ENCODE measurements at regions of chr5 and their contacts with region 1.

Region 1: DNA sequence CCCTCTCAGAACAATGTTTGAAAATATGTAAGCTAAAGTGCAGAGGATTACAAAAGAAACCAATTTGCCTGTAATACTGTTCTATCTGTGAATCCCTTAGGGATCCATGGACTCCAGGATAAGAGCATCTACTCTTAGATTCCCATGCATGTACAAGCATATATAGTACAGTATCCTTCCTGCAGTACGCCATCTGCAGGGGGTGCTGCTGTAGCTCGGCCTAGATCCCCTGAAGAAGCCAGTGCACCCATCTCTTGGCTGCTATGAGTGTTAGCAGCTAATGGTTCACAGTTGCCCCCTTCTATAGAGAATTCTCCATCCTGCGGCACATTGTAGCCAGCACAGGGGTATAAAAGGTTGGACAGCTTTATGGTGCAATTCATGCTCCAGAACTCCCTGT is 61.8 kb upstream of the SLC30A5 start:
- DNase-seq: no peak
- H3K4me3 ChIP-seq: no peak overlapping the region
- H3K4me3 Mint-ChIP-seq: no peak overlapping the region
- H3K27ac Mint-ChIP-seq: no peak overlapping the region
- H3K4me1 ChIP-seq: no peaks in the 10 kb centered on the region
- H3K4me1 Mint-ChIP-seq: peaks cover 6% of the 10 kb centered on the region
- H3K27me3 ChIP-seq: no peaks in the 10 kb centered on the region
- H3K27me3 Mint-ChIP-seq: peaks cover 2% of the 10 kb centered on the region
- CTCF ChIP-seq: peak in 1 of 2 experiments; percentile 32

Region 2: GRCh38 chr5:67672636-67673035 is 1359.4 kb before region 1 on chr5:
- CTCF ChIA-PET with region 1: no interaction called
- POLR2A ChIA-PET with region 1: no interaction called
- intact Hi-C with region 1: no loop called
- DNase-seq: no peak
- H3K4me3 ChIP-seq: no peak overlapping the region
- H3K4me3 Mint-ChIP-seq: no peak overlapping the region
- H3K27ac Mint-ChIP-seq: no peak overlapping the region
- H3K4me1 ChIP-seq: no peaks in the 10 kb centered on the region
- H3K4me1 Mint-ChIP-seq: no peaks in the 10 kb centered on the region
- H3K27me3 ChIP-seq: no peaks in the 10 kb centered on the region
- H3K27me3 Mint-ChIP-seq: no peaks in the 10 kb centered on the region
- CTCF ChIP-seq: no peak

Region 3: GRCh38 chr5:69152731-69153130 is 120.7 kb after region 1 on chr5:
- CTCF ChIA-PET with region 1: interaction called, 3 read pairs
- POLR2A ChIA-PET with region 1: interaction called, 12 read pairs
- intact Hi-C with region 1: no loop called
- DNase-seq: no peak
- H3K4me3 ChIP-seq: no peak overlapping the region
- H3K4me3 Mint-ChIP-seq: no peak overlapping the region
- H3K27ac Mint-ChIP-seq: no peak overlapping the region
- H3K4me1 ChIP-seq: no peaks in the 10 kb centered on the region
- H3K4me1 Mint-ChIP-seq: no peaks in the 10 kb centered on the region
- H3K27me3 ChIP-seq: no peaks in the 10 kb centered on the region
- H3K27me3 Mint-ChIP-seq: no peaks in the 10 kb centered on the region
- CTCF ChIP-seq: no peak

Measured in Caco-2 (cell line).